HEK293T (cell line): ENCODE measurements at regions of chr1 and their contacts with region 1.

Region 1: GRCh38 chr1:109075531-109076490 is at the start of gene TAF13:
- DNase-seq: peak; percentile 98

Region 2: GRCh38 chr1:109041621-109042468 is 34.0 kb before region 1 on chr1 and contains the start of gene WDR47:
- CTCF ChIA-PET with region 1: no interaction called
- POLR2A ChIA-PET with region 1: interaction called, 10 read pairs
- DNase-seq: peak; percentile 100

Region 3: GRCh38 chr1:109061183-109061582 is 14.6 kb before region 1 on chr1:
- CTCF ChIA-PET with region 1: no interaction called
- POLR2A ChIA-PET with region 1: interaction called, 12 read pairs
- DNase-seq: no peak

Region 4: DNA sequence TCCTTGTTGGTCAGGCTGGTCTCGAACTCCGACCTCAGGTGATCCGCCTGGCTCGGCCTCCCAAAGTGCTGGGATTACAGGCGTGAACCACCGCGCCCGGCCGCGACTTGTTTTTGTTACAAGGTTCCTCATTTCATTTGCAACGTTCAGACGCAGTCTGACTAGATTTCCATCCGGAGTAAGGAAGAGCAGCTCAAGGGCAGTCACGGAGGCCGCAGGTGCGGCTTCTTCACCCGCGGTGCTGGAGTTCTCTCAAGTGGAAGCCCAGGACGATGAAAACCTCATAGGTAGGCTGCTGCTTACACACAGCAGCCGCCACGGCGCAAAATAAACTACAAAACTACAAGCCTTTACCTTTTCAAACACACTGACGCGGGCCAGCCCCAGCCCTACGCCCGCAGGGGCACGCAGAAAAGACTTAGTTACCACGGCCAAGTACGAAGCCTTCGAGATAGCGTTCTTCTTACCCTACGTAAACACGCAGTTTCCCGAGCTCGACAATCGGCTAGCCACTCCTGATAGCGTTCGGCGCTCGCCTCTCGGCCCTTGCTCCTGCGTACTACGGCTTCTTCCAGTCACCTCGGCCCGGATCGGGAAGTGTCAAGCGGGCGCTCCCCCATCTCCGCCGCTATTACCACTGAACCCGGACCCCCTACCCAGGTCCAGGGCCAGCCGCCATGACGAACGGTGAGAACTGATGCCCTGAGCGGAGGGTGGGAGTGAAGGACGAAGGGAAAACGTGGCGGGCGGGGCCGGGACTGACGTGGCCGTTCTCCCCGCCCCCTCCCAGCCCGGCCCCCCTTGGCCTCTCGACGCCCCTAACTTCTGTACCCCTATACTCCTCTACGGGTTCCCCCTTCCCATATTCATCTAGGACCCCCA is 14.6 kb after region 1 on chr1 and contains the start of gene TMEM167B:
- CTCF ChIA-PET with region 1: no interaction called
- POLR2A ChIA-PET with region 1: interaction called, 24 read pairs
- DNase-seq: peak; percentile 87